ENCODE measurements at regions of chr18 and their contacts with region 1.

Region 1: GRCh38 chr18:50878345-50879301 is at the start of gene ME2:
- DNase-seq: peak; percentile 77 to 94 (median 88)
- ATAC-seq: peak; percentile 90
- H3K4me3 ChIP-seq: peak within 1 kb of the TSS; percentile 93
- H3K4me3 Mint-ChIP-seq: peak within 1 kb of the TSS; percentile 98
- H3K27ac ChIP-seq: peak within 1 kb of the TSS; percentile 95 to 97
- H3K27ac Mint-ChIP-seq: peak within 1 kb of the TSS; percentile 97
- H3K4me1 ChIP-seq: peaks cover 32% of the 10 kb centered on the region
- H3K4me1 Mint-ChIP-seq: peaks cover 28% of the 10 kb centered on the region
- H3K27me3 ChIP-seq: no peaks in the 10 kb centered on the region
- H3K27me3 Mint-ChIP-seq: peaks cover 6% of the 10 kb centered on the region
- CTCF ChIP-seq: no peak
- total RNA-seq, gene ME2: 15.6 to 16.1 TPM

Region 2: GRCh38 chr18:50819728-50820378 is 58.8 kb before region 1 on chr18 and contains the start of gene MRO:
- CTCF ChIA-PET with region 1: no interaction called
- POLR2A ChIA-PET with region 1: interaction called, 5 read pairs
- intact Hi-C with region 1: loop called in 1 of 2 experiments (anchors 10 kb)
- DNase-seq: peak; percentile 61 to 88 (median 74)
- ATAC-seq: peak; percentile 100
- H3K4me3 ChIP-seq: peak within 1 kb of the TSS; percentile 51
- H3K4me3 Mint-ChIP-seq: no peak within 1 kb of the TSS
- H3K27ac ChIP-seq: no peak within 1 kb of the TSS
- H3K27ac Mint-ChIP-seq: no peak within 1 kb of the TSS
- H3K4me1 ChIP-seq: peaks cover 14% of the 10 kb centered on the region
- H3K4me1 Mint-ChIP-seq: no peaks in the 10 kb centered on the region
- H3K27me3 ChIP-seq: peaks cover 7 to 11% of the 10 kb centered on the region in 2 experiments
- H3K27me3 Mint-ChIP-seq: peaks cover 26% of the 10 kb centered on the region
- CTCF ChIP-seq: peak; percentile 96
- total RNA-seq, gene MRO: not detected

Region 3: GRCh38 chr18:50967714-50968661 is 89.4 kb after region 1 on chr18 and contains the start of gene ELAC1:
- CTCF ChIA-PET with region 1: no interaction called
- POLR2A ChIA-PET with region 1: interaction called, 52 read pairs
- intact Hi-C with region 1: loop called (anchors 1 to 2 kb)
- DNase-seq: peak; percentile 43 to 86 (median 59)
- ATAC-seq: peak; percentile 89
- H3K4me3 ChIP-seq: peak within 1 kb of the TSS; percentile 88
- H3K4me3 Mint-ChIP-seq: peak within 1 kb of the TSS; percentile 96
- H3K27ac ChIP-seq: peak within 1 kb of the TSS; percentile 78 to 85
- H3K27ac Mint-ChIP-seq: peak within 1 kb of the TSS; percentile 83
- H3K4me1 ChIP-seq: peaks cover 9% of the 10 kb centered on the region
- H3K4me1 Mint-ChIP-seq: peaks cover 37% of the 10 kb centered on the region
- H3K27me3 ChIP-seq: no peaks in the 10 kb centered on the region
- H3K27me3 Mint-ChIP-seq: no peaks in the 10 kb centered on the region
- CTCF ChIP-seq: no peak
- total RNA-seq, gene ELAC1: 3.0 to 4.6 TPM

Region 4: DNA sequence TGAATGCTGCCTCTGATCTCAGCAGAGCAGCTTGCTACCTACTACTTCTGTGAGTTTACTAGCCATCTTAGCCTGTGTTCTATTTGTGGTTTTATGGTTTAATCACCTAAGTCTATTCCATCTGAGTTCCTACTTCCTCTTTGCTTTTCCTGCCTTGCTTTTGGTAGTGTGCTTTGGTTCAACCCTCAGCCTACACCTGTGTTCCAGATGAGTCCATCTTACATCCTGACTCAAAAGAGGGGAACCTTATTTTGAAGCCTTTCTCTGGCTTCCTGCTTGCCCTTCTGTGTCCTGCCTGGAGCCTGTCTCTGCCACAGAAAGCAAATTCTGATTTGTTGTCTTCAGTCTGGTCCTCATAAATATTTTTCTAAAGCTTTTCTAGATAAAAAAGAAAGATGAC is 849.2 kb after region 1 on chr18:
- CTCF ChIA-PET with region 1: no interaction called
- POLR2A ChIA-PET with region 1: no interaction called
- intact Hi-C with region 1: no loop called
- DNase-seq: no peak
- ATAC-seq: no peak
- H3K4me3 ChIP-seq: no peak overlapping the region
- H3K4me3 Mint-ChIP-seq: no peak overlapping the region
- H3K27ac ChIP-seq: no peak overlapping the region
- H3K27ac Mint-ChIP-seq: no peak overlapping the region
- H3K4me1 ChIP-seq: no peaks in the 10 kb centered on the region
- H3K4me1 Mint-ChIP-seq: no peaks in the 10 kb centered on the region
- H3K27me3 ChIP-seq: no peaks in the 10 kb centered on the region
- H3K27me3 Mint-ChIP-seq: peaks cover 8% of the 10 kb centered on the region
- CTCF ChIP-seq: no peak